SK-N-SH (cell line): ENCODE measurements at regions of chr5 and their contacts with region 1.

Region 1: GRCh38 chr5:175534070-175534932 is 55.9 kb downstream of the SFXN1 start:
- DNase-seq: peak; percentile 90
- H3K4me3 ChIP-seq: peak overlapping the region; percentile 17 to 46; a peak in 2 of 4 replicates
- H3K27ac ChIP-seq: no peak overlapping the region; a peak in 1 of 4 replicates
- H3K4me1 ChIP-seq: peaks cover 0 to 15% of the 10 kb centered on the region in 2 experiments; a peak in 2 of 4 replicates
- H3K27me3 ChIP-seq: no peaks in the 10 kb centered on the region
- CTCF ChIP-seq: peak; percentile 85
- EP300 ChIP-seq: no peak
- RAD21 ChIP-seq: peak; percentile 97

Region 2: GRCh38 chr5:175288048-175288621 is 246.2 kb before region 1 on chr5:
- CTCF ChIA-PET with region 1: no interaction called
- POLR2A ChIA-PET with region 1: no interaction called
- DNase-seq: no peak
- H3K4me3 ChIP-seq: no peak overlapping the region
- H3K27ac ChIP-seq: peak overlapping the region in 1 of 2 experiments; percentile 65; a peak in 3 of 4 replicates
- H3K4me1 ChIP-seq: no peaks in the 10 kb centered on the region
- H3K27me3 ChIP-seq: no peaks in the 10 kb centered on the region
- CTCF ChIP-seq: no peak
- EP300 ChIP-seq: peak in 1 of 2 experiments; percentile 5; a peak in 1 of 4 replicates
- RAD21 ChIP-seq: no peak

Region 3: DNA sequence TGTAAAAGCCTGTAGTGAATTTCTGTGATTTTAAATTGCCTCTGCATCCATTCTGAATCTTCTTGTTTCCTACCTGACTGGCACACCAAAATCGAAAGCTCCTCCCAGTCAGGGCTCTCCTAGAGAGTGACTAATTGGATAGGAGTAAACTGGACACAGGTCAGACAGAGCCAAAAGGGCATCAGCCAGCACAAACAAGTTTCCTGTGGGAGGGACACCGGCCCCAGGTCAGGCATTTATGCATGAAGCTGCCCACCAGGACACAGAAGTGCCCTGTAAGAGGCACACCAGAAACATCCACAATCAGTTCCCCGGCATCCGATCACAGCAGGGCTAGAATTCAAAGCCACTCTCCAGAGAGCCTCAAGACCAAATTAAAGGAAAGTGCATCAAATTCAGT is 22.5 kb after region 1 on chr5:
- CTCF ChIA-PET with region 1: interaction called, 18 read pairs
- POLR2A ChIA-PET with region 1: no interaction called
- DNase-seq: no peak
- H3K4me3 ChIP-seq: no peak overlapping the region
- H3K27ac ChIP-seq: no peak overlapping the region
- H3K4me1 ChIP-seq: no peaks in the 10 kb centered on the region
- H3K27me3 ChIP-seq: no peaks in the 10 kb centered on the region
- CTCF ChIP-seq: no peak
- EP300 ChIP-seq: no peak
- RAD21 ChIP-seq: no peak

Region 4: GRCh38 chr5:175696139-175696854 is 162.0 kb after region 1 on chr5:
- CTCF ChIA-PET with region 1: interaction called, 45 read pairs
- POLR2A ChIA-PET with region 1: no interaction called
- DNase-seq: peak; percentile 55
- H3K4me3 ChIP-seq: no peak overlapping the region
- H3K27ac ChIP-seq: no peak overlapping the region
- H3K4me1 ChIP-seq: peaks cover 0 to 3% of the 10 kb centered on the region in 2 experiments; a peak in 1 of 4 replicates
- H3K27me3 ChIP-seq: no peaks in the 10 kb centered on the region
- CTCF ChIP-seq: peak; percentile 29
- EP300 ChIP-seq: no peak
- RAD21 ChIP-seq: peak; percentile 27; the same call in 1 of the 2 replicates

Region 5: GRCh38 chr5:175718401-175719108 is 184.3 kb after region 1 on chr5:
- CTCF ChIA-PET with region 1: interaction called, 66 read pairs
- POLR2A ChIA-PET with region 1: no interaction called
- DNase-seq: no peak
- H3K4me3 ChIP-seq: no peak overlapping the region
- H3K27ac ChIP-seq: no peak overlapping the region
- H3K4me1 ChIP-seq: no peaks in the 10 kb centered on the region; a peak in 1 of 4 replicates
- H3K27me3 ChIP-seq: no peaks in the 10 kb centered on the region
- CTCF ChIP-seq: peak; percentile 51
- EP300 ChIP-seq: no peak
- RAD21 ChIP-seq: peak; percentile 65

Region 6: GRCh38 chr5:175867587-175868347 is 333.5 kb after region 1 on chr5:
- CTCF ChIA-PET with region 1: interaction called, 14 read pairs
- POLR2A ChIA-PET with region 1: no interaction called
- DNase-seq: peak; percentile 85
- H3K4me3 ChIP-seq: no peak overlapping the region
- H3K27ac ChIP-seq: peak overlapping the region in 1 of 2 experiments; percentile 43; a peak in 2 of 4 replicates
- H3K4me1 ChIP-seq: peaks cover 0 to 21% of the 10 kb centered on the region in 2 experiments; a peak in 1 of 4 replicates
- H3K27me3 ChIP-seq: no peaks in the 10 kb centered on the region
- CTCF ChIP-seq: peak; percentile 22
- EP300 ChIP-seq: peak in 1 of 2 experiments; percentile 15; a peak in 1 of 4 replicates
- RAD21 ChIP-seq: peak; percentile 75